Calu3 (cell line): ENCODE measurements at regions of chr3 and their contacts with region 1.

Region 1: DNA sequence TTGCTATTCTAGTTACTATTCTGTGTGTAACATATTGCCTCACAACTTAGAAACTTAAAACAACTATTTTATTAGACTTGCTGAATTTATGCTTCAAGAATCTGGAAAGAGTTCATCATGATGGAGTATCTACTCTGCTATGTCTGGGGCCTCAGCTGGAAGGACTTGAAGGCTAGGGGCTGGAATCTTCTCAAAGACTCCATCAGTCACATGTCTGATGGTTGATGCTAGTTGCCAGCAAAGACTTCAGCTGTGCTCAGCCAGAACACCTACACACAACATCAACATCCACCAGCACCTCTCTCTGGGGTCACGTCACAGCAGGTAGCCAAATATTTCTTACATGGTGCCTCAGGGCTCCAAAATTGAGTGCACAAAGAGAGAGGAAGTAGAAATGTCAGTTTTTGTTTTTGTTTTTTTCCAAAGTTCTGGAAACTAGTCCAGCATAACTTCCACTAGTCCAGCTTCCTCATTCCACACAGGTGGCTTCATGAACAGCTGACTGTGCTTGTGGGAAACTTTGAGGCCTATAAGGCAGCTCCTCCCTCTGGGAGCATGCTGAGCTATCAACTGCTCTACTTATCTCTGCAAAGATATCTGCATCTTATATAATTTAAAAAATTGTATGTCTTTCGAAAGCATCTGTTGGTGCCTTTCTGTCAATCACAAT is 325.4 kb upstream of the AGTR1 start:
- DNase-seq: peak; percentile 52
- H3K4me3 Mint-ChIP-seq: no peak overlapping the region
- H3K27ac Mint-ChIP-seq: no peak overlapping the region
- H3K4me1 Mint-ChIP-seq: no peaks in the 10 kb centered on the region
- H3K27me3 Mint-ChIP-seq: no peaks in the 10 kb centered on the region
- CTCF ChIP-seq: no peak

Region 2: DNA sequence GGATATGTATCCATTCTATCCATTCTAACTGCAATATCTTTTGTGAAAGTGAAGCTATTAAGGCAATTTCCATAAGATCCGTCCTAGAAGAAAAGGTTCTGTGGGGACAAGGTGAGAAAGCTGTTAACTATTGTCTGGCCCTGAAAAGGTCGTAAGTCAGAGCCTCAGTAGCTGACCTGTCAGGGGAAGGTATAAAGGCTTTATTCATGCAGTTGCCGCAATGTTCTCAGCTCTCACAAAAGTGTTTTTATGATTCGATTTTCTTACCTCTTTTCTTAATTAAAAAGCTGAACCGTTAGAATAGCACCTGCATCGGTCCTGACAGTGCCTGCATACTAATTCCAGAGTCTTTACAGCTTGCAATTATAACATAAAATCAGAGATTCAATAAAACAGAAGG is 990.7 kb before region 1 on chr3:
- CTCF ChIA-PET with region 1: interaction called, 11 read pairs
- intact Hi-C with region 1: no loop called
- DNase-seq: no peak
- H3K4me3 Mint-ChIP-seq: no peak overlapping the region
- H3K27ac Mint-ChIP-seq: no peak overlapping the region
- H3K4me1 Mint-ChIP-seq: no peaks in the 10 kb centered on the region
- H3K27me3 Mint-ChIP-seq: no peaks in the 10 kb centered on the region
- CTCF ChIP-seq: no peak